Caco-2 (cell line): ENCODE measurements at regions of chr9 and their contacts with region 1.

Region 1: GRCh38 chr9:125631391-125632085 is 75.5 kb downstream of the MAPKAP1 start:
- DNase-seq: peak in 1 of 2 experiments; percentile 56
- H3K4me3 ChIP-seq: no peak overlapping the region
- H3K4me3 Mint-ChIP-seq: no peak overlapping the region
- H3K27ac Mint-ChIP-seq: peak overlapping the region; percentile 29
- H3K4me1 ChIP-seq: peaks cover 27% of the 10 kb centered on the region
- H3K4me1 Mint-ChIP-seq: peaks cover 37% of the 10 kb centered on the region
- H3K27me3 ChIP-seq: no peaks in the 10 kb centered on the region
- H3K27me3 Mint-ChIP-seq: no peaks in the 10 kb centered on the region
- CTCF ChIP-seq: peak; percentile 49 to 73

Region 2: DNA sequence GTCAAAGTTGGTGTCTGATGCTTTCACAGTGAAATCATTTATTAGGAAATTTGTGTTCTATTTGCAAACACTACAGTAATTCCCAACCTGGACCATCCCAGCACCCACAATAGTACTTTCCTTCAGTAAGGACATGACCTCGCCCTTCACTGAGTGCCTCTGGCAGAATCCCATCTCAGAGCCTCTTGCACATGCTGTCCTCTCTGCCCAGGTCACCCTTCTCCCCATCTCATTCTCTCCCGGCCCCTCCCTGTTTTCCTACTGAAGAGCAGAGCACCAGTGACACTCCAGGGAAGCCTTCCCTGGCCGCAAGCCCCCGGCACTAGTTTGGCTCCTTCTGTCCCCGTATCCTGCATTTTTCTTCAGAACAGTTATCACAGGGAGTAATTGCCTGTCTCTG is 145.0 kb before region 1 on chr9:
- CTCF ChIA-PET with region 1: no interaction called
- POLR2A ChIA-PET with region 1: no interaction called
- intact Hi-C with region 1: loop called (anchors 1 kb)
- DNase-seq: no peak
- H3K4me3 ChIP-seq: no peak overlapping the region
- H3K4me3 Mint-ChIP-seq: no peak overlapping the region
- H3K27ac Mint-ChIP-seq: no peak overlapping the region
- H3K4me1 ChIP-seq: no peaks in the 10 kb centered on the region
- H3K4me1 Mint-ChIP-seq: no peaks in the 10 kb centered on the region
- H3K27me3 ChIP-seq: no peaks in the 10 kb centered on the region
- H3K27me3 Mint-ChIP-seq: no peaks in the 10 kb centered on the region
- CTCF ChIP-seq: no peak

Region 3: GRCh38 chr9:125558453-125559092 is 73.0 kb before region 1 on chr9:
- CTCF ChIA-PET with region 1: interaction called, 7 read pairs
- POLR2A ChIA-PET with region 1: no interaction called
- intact Hi-C with region 1: loop called (anchors 1 kb)
- DNase-seq: peak; percentile 72 to 79
- H3K4me3 ChIP-seq: no peak overlapping the region
- H3K4me3 Mint-ChIP-seq: no peak overlapping the region
- H3K27ac Mint-ChIP-seq: no peak overlapping the region
- H3K4me1 ChIP-seq: no peaks in the 10 kb centered on the region
- H3K4me1 Mint-ChIP-seq: no peaks in the 10 kb centered on the region
- H3K27me3 ChIP-seq: no peaks in the 10 kb centered on the region
- H3K27me3 Mint-ChIP-seq: no peaks in the 10 kb centered on the region
- CTCF ChIP-seq: peak; percentile 79 to 82

Region 4: DNA sequence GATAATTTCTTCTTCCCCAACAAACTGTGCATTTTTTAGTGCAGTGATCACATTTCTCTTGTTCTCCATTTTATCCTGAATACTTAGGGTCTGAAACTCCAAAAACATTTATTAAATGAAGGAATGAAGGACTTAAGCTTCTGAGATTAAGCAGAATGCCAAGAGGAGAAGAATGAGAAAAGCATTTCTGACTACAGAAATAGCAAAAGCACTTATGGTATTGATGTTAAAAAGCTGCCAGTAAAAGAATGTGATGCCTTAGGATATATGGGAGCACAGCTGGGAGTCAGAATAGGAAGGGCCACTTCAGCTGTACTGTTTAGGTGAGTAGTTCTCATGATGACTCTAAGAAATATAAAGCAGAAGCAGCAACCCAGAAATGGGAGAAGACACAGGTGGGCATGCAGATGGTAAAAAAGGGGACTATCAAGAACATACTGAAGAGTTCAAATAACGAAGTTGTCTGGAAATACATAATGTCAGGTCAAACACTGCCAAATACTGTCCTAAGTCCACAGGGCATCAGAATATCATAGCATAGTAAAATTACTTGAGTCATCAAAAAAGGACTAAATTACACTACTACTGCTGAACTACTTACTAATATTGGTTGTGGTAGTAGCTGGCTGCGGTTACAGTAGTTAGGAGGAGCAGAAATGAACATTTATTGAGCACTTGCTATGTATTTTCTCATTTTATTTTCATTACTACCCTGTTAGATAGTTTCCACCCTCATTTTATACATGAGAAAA is 57.2 kb before region 1 on chr9:
- CTCF ChIA-PET with region 1: no interaction called
- POLR2A ChIA-PET with region 1: no interaction called
- intact Hi-C with region 1: loop called (anchors 5 kb)
- DNase-seq: no peak
- H3K4me3 ChIP-seq: no peak overlapping the region
- H3K4me3 Mint-ChIP-seq: no peak overlapping the region
- H3K27ac Mint-ChIP-seq: peak overlapping the region; percentile 8
- H3K4me1 ChIP-seq: peaks cover 31% of the 10 kb centered on the region
- H3K4me1 Mint-ChIP-seq: peaks cover 14% of the 10 kb centered on the region
- H3K27me3 ChIP-seq: no peaks in the 10 kb centered on the region
- H3K27me3 Mint-ChIP-seq: no peaks in the 10 kb centered on the region
- CTCF ChIP-seq: no peak